ENCODE measurements at regions of chr1 and their contacts with region 1.

Region 1: GRCh38 chr1:200620273-200621131 is at the start of gene KIF14:
- DNase-seq: peak; percentile 96
- CTCF ChIP-seq: no peak

Region 2: GRCh38 chr1:200226268-200226968 is 394.1 kb before region 1 on chr1:
- in situ Hi-C with region 1: no loop called
- DNase-seq: no peak
- CTCF ChIP-seq: no peak

Region 3: GRCh38 chr1:200802865-200803512 is 182.5 kb after region 1 on chr1:
- in situ Hi-C with region 1: loop called (anchors 5 kb)
- DNase-seq: peak; percentile 57
- CTCF ChIP-seq: peak; percentile 88

Region 4: GRCh38 chr1:201268604-201269151 is 648.2 kb after region 1 on chr1:
- in situ Hi-C with region 1: no loop called
- DNase-seq: no peak
- CTCF ChIP-seq: no peak